ENCODE measurements at regions of chr3 and their contacts with region 1.

Region 1: GRCh38 chr3:37456270-37456708 is 281.9 kb upstream of the LRRFIP2 start:
- DNase-seq: peak; percentile 94
- H3K4me3 ChIP-seq: peak overlapping the region; percentile 15 to 37 (median 20)
- H3K27ac ChIP-seq: peak overlapping the region; percentile 87 to 95 (median 93)
- H3K4me1 ChIP-seq: peaks cover 68 to 80% (median 74%) of the 10 kb centered on the region in 4 donors
- H3K27me3 ChIP-seq: no peaks in the 10 kb centered on the region
- CTCF ChIP-seq: peak in 2 of 3 experiments; percentile 12 to 25
- EP300 ChIP-seq: peak; percentile 4
- POLR2A ChIP-seq: no peak

Region 2: GRCh38 chr3:37562876-37563275 is 106.6 kb after region 1 on chr3:
- intact Hi-C with region 1: no loop called
- DNase-seq: no peak
- H3K4me3 ChIP-seq: no peak overlapping the region
- H3K27ac ChIP-seq: no peak overlapping the region
- H3K4me1 ChIP-seq: peaks cover 20 to 37% (median 23%) of the 10 kb centered on the region in 4 donors
- H3K27me3 ChIP-seq: no peaks in the 10 kb centered on the region
- CTCF ChIP-seq: no peak
- EP300 ChIP-seq: no peak
- POLR2A ChIP-seq: no peak

Region 3: GRCh38 chr3:37741644-37742043 is 285.4 kb after region 1 on chr3:
- intact Hi-C with region 1: loop called (anchors 2 kb)
- DNase-seq: peak; percentile 79
- H3K4me3 ChIP-seq: no peak overlapping the region
- H3K27ac ChIP-seq: peak overlapping the region; percentile 30 to 70 (median 60)
- H3K4me1 ChIP-seq: peaks cover 29 to 62% (median 44%) of the 10 kb centered on the region in 4 donors
- H3K27me3 ChIP-seq: no peaks in the 10 kb centered on the region
- CTCF ChIP-seq: peak; percentile 43 to 58 (median 50)
- EP300 ChIP-seq: no peak
- POLR2A ChIP-seq: no peak